Activated naive CD4-positive, alpha-beta T cell treated with anti-CD3 and anti-CD28 coated beads for 36 hours (primary cell): ENCODE measurements at regions of chr12 and their contacts with region 1.

Region 1: GRCh38 chr12:114662512-114663177 is 21.3 kb downstream of the TBX3 start:
- DNase-seq: peak; percentile 85
- H3K4me3 Mint-ChIP-seq: no peak overlapping the region
- H3K27ac Mint-ChIP-seq: no peak overlapping the region
- H3K4me1 Mint-ChIP-seq: peaks cover 10% of the 10 kb centered on the region
- H3K27me3 Mint-ChIP-seq: peaks cover 44% of the 10 kb centered on the region

Region 2: DNA sequence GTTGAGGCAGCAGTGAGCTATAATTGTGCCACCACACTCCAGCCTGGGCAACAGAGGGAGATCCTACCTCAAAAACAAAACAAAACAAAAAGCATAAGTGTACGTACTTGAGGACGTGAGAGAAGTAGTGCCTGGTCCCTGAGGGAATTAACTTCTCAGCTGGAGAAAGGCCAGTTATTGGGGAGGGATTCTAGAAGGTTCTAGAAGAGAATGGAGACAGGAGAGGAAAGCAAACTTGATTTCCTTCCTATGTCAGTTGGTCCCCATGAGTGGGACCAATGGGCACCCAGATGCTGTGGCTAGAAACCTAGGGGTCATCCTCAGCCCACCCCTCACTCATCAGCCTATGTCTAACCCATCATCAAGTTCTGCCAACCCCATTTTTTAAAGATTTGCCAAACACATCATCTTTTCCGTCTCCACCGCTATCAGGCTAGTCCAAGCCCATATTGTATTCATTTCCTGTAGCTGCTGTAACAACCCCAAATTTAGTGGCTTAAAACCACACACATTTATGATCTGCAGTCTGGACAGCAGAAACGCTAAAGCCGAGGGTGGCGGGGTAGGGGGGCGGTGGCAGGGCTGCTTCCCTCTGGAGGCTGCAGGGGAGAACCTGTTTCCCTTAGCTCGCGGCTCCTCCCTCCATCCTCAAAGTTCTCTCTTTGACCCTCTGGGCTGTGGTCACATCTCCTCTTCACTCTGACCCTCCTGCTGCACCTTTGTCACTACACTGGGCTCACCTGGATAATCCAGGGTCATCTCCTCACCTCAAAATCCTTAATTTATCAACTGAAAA is 689.3 kb before region 1 on chr12:
- CTCF ChIA-PET with region 1: no interaction called
- intact Hi-C with region 1: loop called (anchors 10 kb)
- DNase-seq: no peak
- H3K4me3 Mint-ChIP-seq: no peak overlapping the region
- H3K27ac Mint-ChIP-seq: no peak overlapping the region
- H3K4me1 Mint-ChIP-seq: peaks cover 3% of the 10 kb centered on the region
- H3K27me3 Mint-ChIP-seq: peaks cover 24% of the 10 kb centered on the region

Region 3: GRCh38 chr12:115632308-115632707 is 969.7 kb after region 1 on chr12:
- CTCF ChIA-PET with region 1: no interaction called
- intact Hi-C with region 1: loop called (anchors 10 kb)
- DNase-seq: no peak
- H3K4me3 Mint-ChIP-seq: no peak overlapping the region
- H3K27ac Mint-ChIP-seq: no peak overlapping the region
- H3K4me1 Mint-ChIP-seq: no peaks in the 10 kb centered on the region
- H3K27me3 Mint-ChIP-seq: peaks cover 2% of the 10 kb centered on the region

Region 4: GRCh38 chr12:115752913-115753726 is 1090.5 kb after region 1 on chr12:
- CTCF ChIA-PET with region 1: interaction called, 4 read pairs
- intact Hi-C with region 1: loop called (anchors 1 kb)
- DNase-seq: peak; percentile 5
- H3K4me3 Mint-ChIP-seq: no peak overlapping the region
- H3K27ac Mint-ChIP-seq: no peak overlapping the region
- H3K4me1 Mint-ChIP-seq: no peaks in the 10 kb centered on the region
- H3K27me3 Mint-ChIP-seq: peaks cover 13% of the 10 kb centered on the region

Region 5: DNA sequence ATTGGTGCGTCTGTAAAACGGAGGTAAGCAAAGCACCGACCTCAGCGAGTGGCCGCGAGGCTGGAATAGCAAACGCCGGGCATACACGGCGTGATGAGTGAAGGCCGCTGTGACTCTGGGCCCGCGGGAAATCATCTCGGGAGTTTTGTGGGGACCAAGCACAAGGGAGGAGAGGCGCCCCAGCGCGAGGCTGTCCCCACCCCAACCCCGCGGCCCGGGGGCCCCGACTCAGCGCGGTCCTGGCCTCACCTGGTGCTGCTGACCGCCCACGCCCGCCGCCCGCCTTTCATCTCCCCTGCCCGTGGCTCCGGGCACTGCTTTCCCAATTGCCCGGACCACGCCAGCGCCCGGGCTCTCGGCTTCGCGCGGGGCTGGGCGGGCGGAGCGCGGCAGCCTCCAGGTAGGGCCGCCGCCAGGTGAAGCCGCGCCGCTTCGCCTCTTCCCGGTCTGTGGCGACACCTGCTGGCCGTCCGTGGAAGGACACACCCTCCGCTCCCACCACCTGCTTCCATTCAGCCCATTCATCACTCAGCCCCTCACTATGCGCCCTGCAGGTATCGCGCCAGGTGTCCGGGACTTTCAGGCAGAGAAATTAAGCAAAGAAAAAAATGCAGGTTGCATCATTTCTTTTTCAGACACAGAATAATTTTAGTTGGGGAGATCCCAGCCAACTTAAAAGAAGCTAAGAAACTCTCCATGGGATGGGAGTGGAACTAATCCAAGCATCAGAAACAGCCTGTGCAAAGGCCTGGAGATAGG is 1254.4 kb after region 1 on chr12:
- CTCF ChIA-PET with region 1: interaction called, 6 read pairs
- intact Hi-C with region 1: loop called (anchors 1 kb)
- DNase-seq: peak; percentile 78
- H3K4me3 Mint-ChIP-seq: no peak overlapping the region
- H3K27ac Mint-ChIP-seq: no peak overlapping the region
- H3K4me1 Mint-ChIP-seq: no peaks in the 10 kb centered on the region
- H3K27me3 Mint-ChIP-seq: peaks cover 32% of the 10 kb centered on the region